Endothelial cell of umbilical vein (primary cell): ENCODE measurements at regions of chr19 and their contacts with region 1.

Region 1: GRCh38 chr19:10644260-10645007 is 9.7 kb upstream of the ILF3 start:
- DNase-seq: peak; percentile 80
- H3K4me3 ChIP-seq: no peak overlapping the region
- H3K27ac ChIP-seq: no peak overlapping the region
- H3K4me1 ChIP-seq: peaks cover 4% of the 10 kb centered on the region
- H3K27me3 ChIP-seq: no peaks in the 10 kb centered on the region
- CTCF ChIP-seq: peak; percentile 83 to 92
- POLR2A ChIP-seq: no peak

Region 2: GRCh38 chr19:10543420-10544241 is 100.8 kb before region 1 on chr19 and contains the start of gene ATG4D:
- CTCF ChIA-PET with region 1: interaction called, 19 read pairs
- POLR2A ChIA-PET with region 1: no interaction called
- dilution Hi-C with region 1: no loop called
- intact Hi-C with region 1: loop called (anchors 1 kb)
- DNase-seq: peak; percentile 58
- H3K4me3 ChIP-seq: peak within 1 kb of the TSS; percentile 36 to 91 (median 58)
- H3K27ac ChIP-seq: peak within 1 kb of the TSS; percentile 42
- H3K4me1 ChIP-seq: peaks cover 4% of the 10 kb centered on the region
- H3K27me3 ChIP-seq: no peaks in the 10 kb centered on the region
- CTCF ChIP-seq: no peak
- POLR2A ChIP-seq: peak; percentile 75
- total RNA-seq, gene ATG4D: 19.8 and 21.8 TPM in 2 replicates

Region 3: DNA sequence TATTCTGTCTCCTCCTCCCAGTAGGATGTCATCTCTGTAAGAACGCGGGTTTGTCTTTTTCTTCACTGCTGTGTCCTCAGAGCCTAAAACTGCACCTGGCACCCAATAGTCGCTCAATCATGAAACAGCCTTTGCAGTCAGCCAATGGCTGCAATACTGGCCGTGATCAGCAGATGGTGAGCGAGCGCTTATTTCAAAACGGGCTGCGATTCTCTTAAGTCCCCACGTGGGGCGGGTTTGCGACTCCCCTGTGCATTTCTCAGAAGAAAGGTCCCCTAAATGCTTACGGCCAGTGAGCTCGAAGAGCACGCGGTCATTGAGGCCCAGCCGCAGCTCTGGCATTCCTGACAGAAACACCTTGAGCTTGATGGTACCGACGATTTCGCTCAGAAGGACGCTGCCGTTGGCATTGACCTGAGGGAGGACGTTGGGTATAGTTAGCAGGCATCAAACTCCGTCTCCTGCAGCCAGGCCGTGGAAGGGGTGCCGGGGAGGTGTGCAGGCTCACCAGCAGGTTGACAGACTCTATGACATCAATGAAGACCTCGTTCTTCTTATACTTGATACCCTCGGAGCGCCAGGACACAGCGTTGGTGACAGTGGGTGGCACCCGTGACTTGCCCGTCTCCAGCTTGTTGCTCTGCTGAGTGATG is 63.3 kb before region 1 on chr19:
- CTCF ChIA-PET with region 1: interaction called, 654 read pairs
- POLR2A ChIA-PET with region 1: interaction called, 5 read pairs
- dilution Hi-C with region 1: no loop called
- intact Hi-C with region 1: loop called (anchors 1 kb)
- DNase-seq: peak; percentile 88
- H3K4me3 ChIP-seq: no peak overlapping the region
- H3K27ac ChIP-seq: no peak overlapping the region
- H3K4me1 ChIP-seq: no peaks in the 10 kb centered on the region
- H3K27me3 ChIP-seq: no peaks in the 10 kb centered on the region
- CTCF ChIP-seq: peak; percentile 98
- POLR2A ChIP-seq: no peak

Region 4: DNA sequence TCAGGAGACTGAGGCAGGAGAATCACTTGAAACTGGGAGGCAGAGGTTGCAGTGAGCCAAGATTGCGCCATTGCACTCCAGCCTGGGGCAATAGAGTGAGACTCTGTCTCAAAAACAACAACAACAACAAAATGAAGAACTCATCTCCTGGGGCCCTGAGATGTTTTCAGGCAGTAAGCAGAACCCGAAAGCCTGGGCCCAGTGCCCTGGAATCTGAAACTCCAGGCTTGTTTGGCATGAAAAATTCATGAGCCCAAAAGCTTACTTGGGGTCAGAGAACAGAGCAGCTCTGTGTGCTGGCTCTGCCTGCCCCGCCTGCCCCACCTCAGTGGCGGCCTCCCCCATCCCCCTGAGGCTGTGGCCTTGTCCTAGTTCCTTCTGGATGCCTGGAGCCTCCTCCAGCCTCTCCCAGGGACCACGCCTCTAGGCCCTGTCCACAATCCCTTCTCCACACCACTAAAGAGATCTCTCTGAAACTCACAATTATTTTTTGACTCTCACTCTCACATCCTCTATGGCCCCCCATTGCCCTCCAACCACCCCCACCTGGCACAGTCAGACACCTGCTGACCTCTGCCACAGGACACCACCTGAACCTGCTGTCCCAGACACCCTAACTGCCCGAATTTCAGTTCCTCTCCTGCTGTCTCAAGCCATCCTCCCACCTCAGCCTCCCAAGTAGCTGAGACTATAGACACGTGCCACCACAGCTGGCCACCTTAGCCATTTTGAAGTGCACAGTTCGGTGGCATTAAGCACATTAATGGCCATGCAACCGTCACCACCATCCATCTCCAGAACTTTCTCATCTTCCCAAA is 50.4 kb before region 1 on chr19:
- CTCF ChIA-PET with region 1: interaction called, 21 read pairs
- POLR2A ChIA-PET with region 1: interaction called, 8 read pairs
- dilution Hi-C with region 1: no loop called
- intact Hi-C with region 1: no loop called
- DNase-seq: no peak
- H3K4me3 ChIP-seq: no peak overlapping the region
- H3K27ac ChIP-seq: no peak overlapping the region
- H3K4me1 ChIP-seq: peaks cover 13% of the 10 kb centered on the region
- H3K27me3 ChIP-seq: no peaks in the 10 kb centered on the region
- CTCF ChIP-seq: no peak
- POLR2A ChIP-seq: no peak

Region 5: GRCh38 chr19:10612491-10613119 is 31.8 kb before region 1 on chr19:
- CTCF ChIA-PET with region 1: interaction called, 10 read pairs
- POLR2A ChIA-PET with region 1: interaction called, 6 read pairs
- dilution Hi-C with region 1: no loop called
- intact Hi-C with region 1: no loop called
- DNase-seq: no peak
- H3K4me3 ChIP-seq: no peak overlapping the region
- H3K27ac ChIP-seq: no peak overlapping the region
- H3K4me1 ChIP-seq: no peaks in the 10 kb centered on the region
- H3K27me3 ChIP-seq: no peaks in the 10 kb centered on the region
- CTCF ChIP-seq: no peak
- POLR2A ChIP-seq: no peak

Region 6: GRCh38 chr19:10634430-10634829 is 10.0 kb before region 1 on chr19:
- CTCF ChIA-PET with region 1: interaction called, 12 read pairs
- POLR2A ChIA-PET with region 1: no interaction called
- dilution Hi-C with region 1: no loop called
- intact Hi-C with region 1: no loop called
- DNase-seq: no peak
- H3K4me3 ChIP-seq: no peak overlapping the region
- H3K27ac ChIP-seq: no peak overlapping the region
- H3K4me1 ChIP-seq: no peaks in the 10 kb centered on the region
- H3K27me3 ChIP-seq: no peaks in the 10 kb centered on the region
- CTCF ChIP-seq: no peak
- POLR2A ChIP-seq: no peak